ENCODE measurements at regions of chr9 and their contacts with region 1.

Region 1: DNA sequence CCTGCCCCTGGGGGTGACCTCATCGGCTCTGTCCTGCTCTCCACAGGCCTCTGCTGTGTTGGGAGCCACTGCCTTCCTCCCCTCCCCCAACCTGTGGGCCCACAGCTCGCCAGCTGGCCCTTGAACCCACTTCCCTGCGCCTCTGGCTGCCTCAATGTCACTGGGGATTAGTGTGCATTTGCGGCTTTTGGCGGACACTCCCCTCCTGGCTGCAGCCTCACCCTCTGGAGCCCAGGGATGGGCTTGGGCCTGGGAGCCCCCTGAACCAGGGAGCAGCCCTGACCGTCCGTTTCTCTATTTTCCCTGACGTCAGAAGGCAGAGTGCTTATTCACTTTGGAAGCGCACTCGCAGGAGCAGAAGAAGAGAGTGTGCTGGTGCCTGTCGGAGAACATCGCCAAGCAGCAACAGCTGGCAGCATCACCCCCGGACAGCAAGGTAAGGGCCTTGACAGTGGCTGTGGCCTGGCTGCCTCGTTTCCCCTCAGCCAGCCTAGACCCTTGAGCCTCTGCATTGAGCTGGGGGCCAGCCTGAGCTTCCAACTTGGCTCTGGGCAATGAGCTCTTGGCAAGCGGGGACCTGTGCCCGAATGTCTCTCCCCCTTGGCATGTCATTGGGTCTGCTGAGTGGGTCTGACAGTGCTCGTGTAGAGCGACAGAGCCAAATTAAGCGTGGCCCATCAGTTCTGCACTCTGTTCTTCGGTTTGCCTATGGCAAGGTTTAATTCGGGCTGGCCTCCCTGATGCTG is 73.1 kb downstream of the RGS3 start:
- DNase-seq: peak; percentile 89

Region 2: DNA sequence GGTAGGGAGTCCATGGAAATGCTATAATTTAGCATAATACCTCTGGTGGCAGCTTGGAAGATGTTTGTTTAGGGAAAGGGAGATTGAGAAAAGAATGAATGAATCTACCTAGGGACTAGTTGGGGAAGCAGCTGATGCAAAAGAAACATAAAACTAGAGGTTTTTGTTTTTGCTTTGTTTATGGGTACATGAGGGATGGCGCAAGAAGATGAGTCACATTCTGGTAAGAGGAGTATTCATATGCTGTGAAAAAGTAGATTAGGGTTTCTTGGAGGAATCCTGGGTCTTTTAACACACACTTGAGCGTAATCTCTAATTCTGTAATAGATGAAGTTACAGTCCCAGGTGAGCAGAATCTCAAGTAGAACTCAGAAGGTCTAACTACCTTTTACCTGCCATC is 109.0 kb before region 1 on chr9:
- intact Hi-C with region 1: no loop called
- DNase-seq: no peak

Region 3: GRCh38 chr9:113463418-113464285 is 73.0 kb before region 1 on chr9 and contains the start of gene RGS3:
- intact Hi-C with region 1: loop called (anchors 5 kb)
- DNase-seq: no peak
- total RNA-seq, gene RGS3: 233 TPM

Region 4: DNA sequence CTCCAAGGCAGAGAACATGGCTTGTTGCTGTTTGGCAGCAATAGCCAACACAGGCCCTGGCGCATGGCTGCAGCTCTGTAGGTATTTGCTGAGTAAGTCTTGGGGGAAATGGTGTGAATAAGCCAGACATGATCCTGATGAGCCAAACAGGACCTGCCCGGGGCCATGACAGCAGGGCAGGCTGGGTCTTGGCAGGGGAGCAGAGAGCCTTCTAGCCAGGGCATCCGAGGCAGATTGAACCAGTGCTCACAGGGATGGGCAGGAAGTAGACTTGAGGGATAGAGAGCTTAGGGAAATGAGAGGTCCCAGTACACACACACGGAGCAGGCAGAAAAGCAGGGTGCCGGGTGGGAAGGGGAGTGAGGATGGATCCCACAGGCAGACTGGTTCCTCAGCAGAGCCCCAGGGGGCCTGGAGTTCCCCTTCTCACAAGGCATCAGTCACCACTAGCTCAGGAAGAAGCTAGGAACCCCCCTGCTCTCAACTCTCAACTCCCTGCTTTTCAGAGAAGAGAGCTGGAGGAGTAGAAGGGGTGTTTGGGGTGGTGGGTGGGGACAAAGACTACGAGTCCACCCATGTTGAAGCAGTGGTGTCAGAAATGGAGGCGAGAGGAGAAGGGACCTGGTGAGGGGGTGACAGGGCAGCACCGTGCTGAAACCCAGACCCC is 37.9 kb after region 1 on chr9:
- intact Hi-C with region 1: loop called (anchors 5 kb)
- DNase-seq: peak; percentile 74

Region 5: DNA sequence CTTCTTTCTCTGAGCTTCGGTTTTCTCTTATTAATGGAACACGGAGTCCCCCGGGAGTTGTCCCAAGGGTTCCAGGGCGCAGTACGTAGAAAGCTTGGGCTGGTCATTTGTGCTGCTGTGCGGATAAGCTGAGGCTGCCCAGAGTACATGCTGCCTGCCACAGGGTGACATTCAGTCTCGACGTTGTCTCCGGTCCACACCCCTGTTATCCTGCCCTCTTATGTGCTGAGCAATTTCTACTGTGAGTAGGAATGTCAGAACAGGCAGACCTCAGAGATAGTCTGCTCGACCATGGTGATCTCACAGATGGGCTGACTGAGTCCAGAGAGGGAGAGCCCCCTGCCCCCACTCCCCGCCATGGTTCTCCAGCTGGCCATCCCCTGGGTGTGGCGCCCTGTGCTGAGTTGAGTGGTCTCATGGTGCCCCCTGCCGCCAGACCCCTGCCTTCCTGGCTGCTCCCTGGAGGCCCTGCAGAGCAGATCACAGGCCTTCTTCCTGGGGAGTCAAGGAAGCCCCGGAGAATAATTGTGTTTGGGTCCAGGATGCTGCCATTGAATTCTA is 50.9 kb after region 1 on chr9:
- intact Hi-C with region 1: no loop called
- DNase-seq: peak; percentile 87

Measured in cardiac septum (tissue), 1 donor.